ENCODE measurements at regions of chr7 and their contacts with region 1.

Region 1: GRCh38 chr7:50266635-50267386 is 37.7 kb upstream of the IKZF1 start:
- DNase-seq: peak in 8 of 9 donors; percentile 79 to 86 (median 82)
- ATAC-seq: peak; percentile 87
- H3K4me3 ChIP-seq: peak overlapping the region; percentile 14
- H3K4me3 Mint-ChIP-seq: peak overlapping the region; percentile 69 to 99 (median 82)
- H3K27ac ChIP-seq: peak overlapping the region; percentile 66
- H3K27ac Mint-ChIP-seq: peak overlapping the region; percentile 87 to 99 (median 95)
- H3K4me1 ChIP-seq: peaks cover 87 to 98% of the 10 kb centered on the region in 2 donors
- H3K4me1 Mint-ChIP-seq: peaks cover 83 to 100% (median 98%) of the 10 kb centered on the region in 7 donors
- H3K27me3 ChIP-seq: no peaks in the 10 kb centered on the region
- H3K27me3 Mint-ChIP-seq: no peaks in the 10 kb centered on the region

Region 2: GRCh38 chr7:50068961-50069551 is 197.8 kb before region 1 on chr7:
- CTCF ChIA-PET with region 1: no interaction called
- POLR2A ChIA-PET with region 1: no interaction called
- intact Hi-C with region 1: loop called in 1 of 2 experiments (anchors 2 kb)
- DNase-seq: peak in 6 of 9 donors; percentile 36 to 65 (median 52)
- ATAC-seq: peak; percentile 71
- H3K4me3 ChIP-seq: peak overlapping the region; percentile 72
- H3K4me3 Mint-ChIP-seq: peak overlapping the region; percentile 82 to 97 (median 90)
- H3K27ac ChIP-seq: peak overlapping the region; percentile 69
- H3K27ac Mint-ChIP-seq: peak overlapping the region; percentile 87 to 99 (median 96)
- H3K4me1 ChIP-seq: peaks cover 8 to 14% of the 10 kb centered on the region in 2 donors
- H3K4me1 Mint-ChIP-seq: peaks cover 12 to 30% (median 26%) of the 10 kb centered on the region in 7 donors
- H3K27me3 ChIP-seq: no peaks in the 10 kb centered on the region
- H3K27me3 Mint-ChIP-seq: peaks cover 0 to 10% (median 5%) of the 10 kb centered on the region in 5 donors

Region 3: GRCh38 chr7:50147951-50148808 is 118.6 kb before region 1 on chr7:
- CTCF ChIA-PET with region 1: no interaction called
- POLR2A ChIA-PET with region 1: interaction called, 5 read pairs
- intact Hi-C with region 1: loop called in 1 of 2 experiments (anchors 2 kb)
- DNase-seq: peak in 7 of 9 donors; percentile 52 to 83 (median 71)
- ATAC-seq: peak; percentile 91
- H3K4me3 ChIP-seq: no peak overlapping the region
- H3K4me3 Mint-ChIP-seq: peak overlapping the region in 8 of 10 donors; percentile 21 to 60 (median 48)
- H3K27ac ChIP-seq: peak overlapping the region; percentile 72
- H3K27ac Mint-ChIP-seq: peak overlapping the region; percentile 57 to 97 (median 87)
- H3K4me1 ChIP-seq: peaks cover 3 to 14% of the 10 kb centered on the region in 2 donors
- H3K4me1 Mint-ChIP-seq: peaks cover 18 to 63% (median 40%) of the 10 kb centered on the region in 7 donors
- H3K27me3 ChIP-seq: no peaks in the 10 kb centered on the region
- H3K27me3 Mint-ChIP-seq: no peaks in the 10 kb centered on the region

Region 4: GRCh38 chr7:50229964-50230363 is 36.8 kb before region 1 on chr7:
- CTCF ChIA-PET with region 1: no interaction called
- POLR2A ChIA-PET with region 1: interaction called, 66 read pairs
- intact Hi-C with region 1: loop called (anchors 1 kb)
- DNase-seq: no peak
- ATAC-seq: no peak
- H3K4me3 ChIP-seq: no peak overlapping the region
- H3K4me3 Mint-ChIP-seq: no peak overlapping the region
- H3K27ac ChIP-seq: no peak overlapping the region
- H3K27ac Mint-ChIP-seq: peak overlapping the region in 1 of 9 donors; percentile 81
- H3K4me1 ChIP-seq: peaks cover 15 to 20% of the 10 kb centered on the region in 2 donors
- H3K4me1 Mint-ChIP-seq: peaks cover 31 to 44% (median 39%) of the 10 kb centered on the region in 7 donors
- H3K27me3 ChIP-seq: no peaks in the 10 kb centered on the region
- H3K27me3 Mint-ChIP-seq: no peaks in the 10 kb centered on the region

Region 5: GRCh38 chr7:50281680-50282445 is 15.1 kb after region 1 on chr7:
- CTCF ChIA-PET with region 1: interaction called, 5 read pairs
- POLR2A ChIA-PET with region 1: interaction called, 1,000 read pairs
- intact Hi-C with region 1: loop called in 1 of 2 experiments (anchors 1 kb)
- DNase-seq: peak in 1 of 9 donors; percentile 34
- ATAC-seq: peak; percentile 83
- H3K4me3 ChIP-seq: peak overlapping the region; percentile 32
- H3K4me3 Mint-ChIP-seq: peak overlapping the region; percentile 65 to 84 (median 75)
- H3K27ac ChIP-seq: peak overlapping the region; percentile 67
- H3K27ac Mint-ChIP-seq: peak overlapping the region; percentile 61 to 95 (median 91)
- H3K4me1 ChIP-seq: peaks cover 19 to 29% of the 10 kb centered on the region in 2 donors
- H3K4me1 Mint-ChIP-seq: peaks cover 31 to 75% (median 66%) of the 10 kb centered on the region in 7 donors
- H3K27me3 ChIP-seq: no peaks in the 10 kb centered on the region
- H3K27me3 Mint-ChIP-seq: no peaks in the 10 kb centered on the region

Region 6: GRCh38 chr7:50335795-50336754 is 69.3 kb after region 1 on chr7:
- CTCF ChIA-PET with region 1: no interaction called
- POLR2A ChIA-PET with region 1: interaction called, 15 read pairs
- intact Hi-C with region 1: no loop called
- DNase-seq: peak in 6 of 9 donors; percentile 54 to 86 (median 60)
- ATAC-seq: peak; percentile 62
- H3K4me3 ChIP-seq: peak overlapping the region; percentile 29
- H3K4me3 Mint-ChIP-seq: peak overlapping the region in 1 of 10 donors; percentile 90
- H3K27ac ChIP-seq: peak overlapping the region; percentile 93
- H3K27ac Mint-ChIP-seq: no peak overlapping the region
- H3K4me1 ChIP-seq: peaks cover 99% of the 10 kb centered on the region in 2 donors
- H3K4me1 Mint-ChIP-seq: peaks cover 0 to 68% (median 17%) of the 10 kb centered on the region in 7 donors
- H3K27me3 ChIP-seq: no peaks in the 10 kb centered on the region
- H3K27me3 Mint-ChIP-seq: no peaks in the 10 kb centered on the region

Region 7: DNA sequence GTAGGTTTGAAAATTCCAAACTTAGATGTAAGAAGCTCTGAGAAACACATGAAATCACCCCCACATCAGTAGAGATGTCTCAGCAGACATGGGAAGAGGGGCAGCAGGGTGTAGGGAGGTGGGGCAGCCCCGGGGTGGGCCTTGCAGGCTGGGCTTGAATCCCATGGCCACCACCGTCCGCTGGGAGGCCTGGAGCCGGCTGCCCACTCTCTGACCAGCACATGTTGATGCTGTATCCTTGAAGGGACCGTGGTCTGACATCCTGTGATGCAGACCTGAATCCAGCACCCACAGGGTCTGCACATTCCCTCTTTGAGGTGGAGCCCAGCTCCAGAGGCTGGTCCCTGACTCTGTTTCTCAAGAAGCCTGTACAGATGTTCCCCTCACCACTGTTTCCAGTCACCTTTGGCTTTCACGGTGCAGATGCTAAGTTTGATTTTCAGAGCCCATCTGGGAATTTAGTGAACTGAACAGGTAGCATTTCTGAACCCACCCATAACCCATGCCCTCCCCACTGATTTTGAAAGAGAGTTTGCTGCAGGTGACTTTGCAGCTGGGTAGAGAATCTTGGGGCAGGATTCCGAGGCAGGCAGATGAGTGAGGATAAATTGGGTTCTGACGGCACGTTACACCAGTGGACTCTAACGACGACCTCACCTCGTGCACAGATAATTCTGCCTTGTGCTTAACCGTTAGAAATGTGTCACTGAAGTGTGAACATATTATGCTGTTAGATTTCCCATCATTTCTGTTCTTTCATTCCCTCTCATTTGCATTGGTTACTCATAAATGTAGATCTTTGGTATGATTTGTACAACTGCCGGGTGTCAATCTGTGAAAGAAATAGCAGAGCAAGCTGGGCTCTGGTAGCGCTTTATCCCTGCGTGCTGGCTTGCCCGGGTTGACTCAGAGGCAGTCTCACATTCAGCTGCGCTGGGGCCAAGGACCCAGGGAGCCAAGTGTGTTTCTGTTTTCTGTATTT is 83.4 kb after region 1 on chr7:
- CTCF ChIA-PET with region 1: interaction called, 4 read pairs
- POLR2A ChIA-PET with region 1: interaction called, 9 read pairs
- intact Hi-C with region 1: loop called in 1 of 2 experiments (anchors 5 kb)
- DNase-seq: peak in 5 of 9 donors; percentile 55 to 77 (median 68)
- ATAC-seq: peak; percentile 51
- H3K4me3 ChIP-seq: peak overlapping the region; percentile 4
- H3K4me3 Mint-ChIP-seq: peak overlapping the region; percentile 71 to 95 (median 78)
- H3K27ac ChIP-seq: peak overlapping the region; percentile 93
- H3K27ac Mint-ChIP-seq: peak overlapping the region in 6 of 9 donors; percentile 91 to 100 (median 100)
- H3K4me1 ChIP-seq: peaks cover 96% of the 10 kb centered on the region in 2 donors
- H3K4me1 Mint-ChIP-seq: peaks cover 0 to 100% (median 97%) of the 10 kb centered on the region in 7 donors
- H3K27me3 ChIP-seq: no peaks in the 10 kb centered on the region
- H3K27me3 Mint-ChIP-seq: no peaks in the 10 kb centered on the region